B cell (primary cell): ENCODE measurements at regions of chr6 and their contacts with region 1.

Region 1: DNA sequence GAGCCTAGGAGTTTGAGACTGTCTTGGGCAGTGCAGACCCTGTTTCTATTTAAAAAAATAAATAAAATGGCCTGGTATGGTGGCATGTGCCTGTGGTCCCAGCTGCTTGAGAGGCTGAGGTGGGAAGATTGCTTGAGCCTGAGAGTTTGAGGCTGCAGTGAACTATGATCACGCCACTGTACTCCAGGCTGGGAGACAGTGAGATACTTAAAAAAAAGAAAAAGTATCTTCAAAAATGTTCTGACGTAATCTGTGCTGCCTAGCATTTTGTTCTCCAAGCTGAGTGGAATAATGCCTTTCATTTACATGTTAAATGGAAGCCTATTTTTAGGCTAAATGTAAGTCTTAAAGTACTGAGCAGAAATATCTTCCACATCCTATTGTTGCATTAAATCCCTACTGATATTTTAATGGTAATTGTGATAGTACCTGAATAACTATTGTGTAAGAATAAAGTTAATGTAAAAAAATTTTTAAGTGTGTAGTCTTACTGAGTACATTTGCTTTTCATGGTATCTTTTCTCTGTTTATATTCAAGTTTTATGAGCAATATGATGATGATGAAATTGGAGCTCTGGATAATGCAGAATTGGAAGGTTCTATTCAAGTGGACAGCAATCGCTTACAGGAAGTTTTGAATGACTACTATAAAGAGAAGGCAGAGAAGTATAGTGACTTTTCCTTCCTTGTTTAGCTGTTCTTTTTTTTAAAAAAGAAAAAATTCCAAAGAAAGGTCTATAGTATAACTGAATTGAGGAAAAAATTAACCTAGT is 4.2 kb upstream of the ZC2HC1B start:
- DNase-seq: no peak
- ATAC-seq: no peak
- H3K4me3 ChIP-seq: no peak overlapping the region
- H3K4me3 Mint-ChIP-seq: no peak overlapping the region
- H3K27ac ChIP-seq: no peak overlapping the region
- H3K27ac Mint-ChIP-seq: no peak overlapping the region
- H3K4me1 ChIP-seq: no peaks in the 10 kb centered on the region
- H3K4me1 Mint-ChIP-seq: no peaks in the 10 kb centered on the region
- H3K27me3 ChIP-seq: no peaks in the 10 kb centered on the region
- H3K27me3 Mint-ChIP-seq: no peaks in the 10 kb centered on the region
- CTCF ChIP-seq: no peak

Region 2: DNA sequence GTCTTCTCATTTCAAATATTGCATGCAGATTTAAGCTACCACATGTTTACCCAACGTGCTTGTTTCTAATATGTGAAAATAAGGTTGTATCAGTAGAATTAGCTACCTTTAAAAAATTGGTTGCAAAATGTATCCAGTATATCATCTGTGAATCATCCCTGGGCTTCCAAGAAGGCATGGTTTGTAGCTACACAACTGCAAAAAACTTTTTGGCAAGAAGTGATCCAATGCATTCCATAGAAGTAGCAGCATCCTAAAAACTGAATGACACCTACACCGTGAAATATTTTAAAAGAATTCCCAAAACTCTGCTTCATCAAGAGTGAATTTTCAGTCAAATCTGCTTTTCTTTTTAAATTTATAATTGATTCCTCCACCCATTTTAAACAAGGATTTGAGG is 710.3 kb before region 1 on chr6:
- CTCF ChIA-PET with region 1: no interaction called
- POLR2A ChIA-PET with region 1: interaction called, 10 read pairs
- intact Hi-C with region 1: no loop called
- DNase-seq: no peak
- ATAC-seq: no peak
- H3K4me3 ChIP-seq: no peak overlapping the region
- H3K4me3 Mint-ChIP-seq: no peak overlapping the region
- H3K27ac ChIP-seq: no peak overlapping the region
- H3K27ac Mint-ChIP-seq: no peak overlapping the region
- H3K4me1 ChIP-seq: no peaks in the 10 kb centered on the region
- H3K4me1 Mint-ChIP-seq: no peaks in the 10 kb centered on the region
- H3K27me3 ChIP-seq: no peaks in the 10 kb centered on the region
- H3K27me3 Mint-ChIP-seq: no peaks in the 10 kb centered on the region
- CTCF ChIP-seq: no peak